ENCODE measurements at regions of chr22 and their contacts with region 1.

Region 1: DNA sequence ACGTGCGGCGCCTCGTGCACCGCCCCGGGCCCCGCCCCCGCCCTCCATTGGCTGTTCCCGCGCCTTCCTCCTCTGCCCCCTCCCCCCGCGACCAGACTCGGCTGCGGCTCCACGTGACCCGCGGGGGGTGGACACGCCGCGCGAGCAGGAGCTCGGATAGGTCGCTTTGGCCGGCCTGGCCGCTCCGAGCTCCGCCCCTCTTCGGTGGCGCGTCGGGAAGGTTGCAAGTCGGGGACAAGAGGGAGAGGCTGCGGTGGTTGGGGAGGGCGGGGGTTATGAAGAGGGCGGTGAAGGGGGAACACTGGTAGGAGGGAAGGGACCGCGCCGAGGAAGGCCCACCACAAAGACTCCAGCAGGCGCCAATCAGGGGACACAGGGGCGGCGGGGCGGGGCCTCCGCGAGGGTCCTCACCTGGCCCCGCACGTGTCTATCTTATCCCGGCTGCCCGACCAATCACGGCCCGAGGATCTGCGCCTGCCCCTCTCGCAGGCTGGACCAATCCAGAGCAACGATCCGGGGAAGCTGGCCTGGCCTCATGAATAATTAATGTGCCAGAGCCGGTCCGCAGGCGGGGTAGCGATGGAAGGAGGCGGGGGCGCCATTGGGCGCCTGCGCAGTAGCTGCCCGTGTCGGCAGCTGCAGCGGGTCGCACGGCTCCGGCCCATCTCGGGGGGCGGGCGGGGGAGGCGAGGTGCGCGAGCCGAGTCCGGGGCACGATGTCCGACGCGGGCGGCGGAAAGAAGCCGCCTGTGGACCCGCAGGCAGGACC is at the start of gene TEF:
- DNase-seq: peak; percentile 96 to 99 (median 98)
- ATAC-seq: peak; percentile 79
- H3K4me3 ChIP-seq: peak within 1 kb of the TSS; percentile 66
- H3K4me3 Mint-ChIP-seq: peak within 1 kb of the TSS; percentile 98
- H3K27ac ChIP-seq: peak within 1 kb of the TSS; percentile 78 to 96
- H3K27ac Mint-ChIP-seq: peak within 1 kb of the TSS; percentile 99
- H3K4me1 ChIP-seq: peaks cover 20% of the 10 kb centered on the region
- H3K4me1 Mint-ChIP-seq: peaks cover 31% of the 10 kb centered on the region
- H3K27me3 ChIP-seq: no peaks in the 10 kb centered on the region
- H3K27me3 Mint-ChIP-seq: no peaks in the 10 kb centered on the region
- CTCF ChIP-seq: no peak
- total RNA-seq, gene TEF: 2.4 to 2.6 TPM

Region 2: GRCh38 chr22:40856513-40857308 is 524.8 kb before region 1 on chr22 and contains the starts of genes ST13 and XPNPEP3:
- CTCF ChIA-PET with region 1: no interaction called
- POLR2A ChIA-PET with region 1: interaction called, 21 read pairs
- intact Hi-C with region 1: loop called (anchors 2 to 5 kb)
- DNase-seq: peak; percentile 94 to 99 (median 96)
- ATAC-seq: peak; percentile 86
- H3K4me3 ChIP-seq: peak within 1 kb of the TSS; percentile 96
- H3K4me3 Mint-ChIP-seq: peak within 1 kb of the TSS; percentile 100
- H3K27ac ChIP-seq: peak within 1 kb of the TSS; percentile 95 to 99
- H3K27ac Mint-ChIP-seq: peak within 1 kb of the TSS; percentile 100
- H3K4me1 ChIP-seq: peaks cover 22% of the 10 kb centered on the region
- H3K4me1 Mint-ChIP-seq: peaks cover 80% of the 10 kb centered on the region
- H3K27me3 ChIP-seq: no peaks in the 10 kb centered on the region
- H3K27me3 Mint-ChIP-seq: no peaks in the 10 kb centered on the region
- CTCF ChIP-seq: peak; percentile 38
- total RNA-seq, gene ST13: 164 to 170 TPM
- total RNA-seq, gene XPNPEP3: 16.3 to 17.9 TPM

Region 3: GRCh38 chr22:41157083-41157482 is 224.4 kb before region 1 on chr22:
- CTCF ChIA-PET with region 1: no interaction called
- POLR2A ChIA-PET with region 1: no interaction called
- intact Hi-C with region 1: no loop called
- DNase-seq: no peak
- ATAC-seq: no peak
- H3K4me3 ChIP-seq: no peak overlapping the region
- H3K4me3 Mint-ChIP-seq: no peak overlapping the region
- H3K27ac ChIP-seq: no peak overlapping the region
- H3K27ac Mint-ChIP-seq: no peak overlapping the region
- H3K4me1 ChIP-seq: no peaks in the 10 kb centered on the region
- H3K4me1 Mint-ChIP-seq: no peaks in the 10 kb centered on the region
- H3K27me3 ChIP-seq: no peaks in the 10 kb centered on the region
- H3K27me3 Mint-ChIP-seq: no peaks in the 10 kb centered on the region
- CTCF ChIP-seq: no peak

Region 4: DNA sequence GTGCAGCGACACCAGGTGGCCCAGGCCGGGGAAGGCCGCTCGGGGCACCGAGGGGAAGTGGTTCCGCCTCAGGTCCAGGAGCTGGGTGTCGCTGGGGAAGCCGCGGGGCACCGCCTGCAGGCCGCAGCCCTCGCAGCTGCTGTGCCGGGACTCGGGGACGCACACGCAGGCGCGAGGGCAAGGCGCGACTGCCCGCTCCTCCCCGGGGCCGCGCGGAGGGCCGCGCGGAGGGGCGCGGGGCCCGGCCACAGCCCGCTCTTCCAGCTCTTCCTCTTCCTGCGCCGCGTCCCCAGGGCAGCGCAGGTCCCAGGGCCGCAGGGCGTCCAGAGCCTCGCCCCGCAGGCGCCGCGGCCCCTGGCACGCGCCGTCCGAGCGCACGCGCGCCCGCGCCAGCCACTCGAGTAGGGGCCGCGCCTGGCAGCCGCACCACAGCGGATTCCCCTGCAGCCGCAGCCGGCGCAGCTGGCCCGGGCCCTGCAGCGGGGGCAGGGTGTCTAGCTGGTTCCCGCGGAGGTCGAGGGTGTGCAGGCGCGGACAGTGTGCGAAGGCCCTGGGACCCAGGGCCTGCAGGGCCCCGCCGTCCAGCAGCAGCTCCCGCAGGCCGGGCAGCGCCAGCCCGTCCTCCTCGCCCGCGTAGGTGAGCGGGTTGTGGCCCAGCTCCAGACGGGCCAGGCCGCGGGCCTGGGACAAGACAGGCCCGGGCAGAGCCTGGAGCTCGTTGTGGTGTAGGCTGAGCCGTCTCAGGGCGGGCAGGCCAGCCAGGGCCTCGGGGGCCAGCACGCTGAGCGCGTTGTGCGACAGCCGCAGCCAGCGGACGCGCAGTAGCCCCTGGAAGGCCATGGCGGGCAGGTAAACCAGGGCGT is 143.6 kb before region 1 on chr22:
- CTCF ChIA-PET with region 1: no interaction called
- POLR2A ChIA-PET with region 1: interaction called, 11 read pairs
- intact Hi-C with region 1: no loop called
- DNase-seq: peak; percentile 74 to 92 (median 84)
- ATAC-seq: peak; percentile 96
- H3K4me3 ChIP-seq: peak overlapping the region; percentile 44
- H3K4me3 Mint-ChIP-seq: peak overlapping the region; percentile 73
- H3K27ac ChIP-seq: no peak overlapping the region
- H3K27ac Mint-ChIP-seq: no peak overlapping the region
- H3K4me1 ChIP-seq: peaks cover 16% of the 10 kb centered on the region
- H3K4me1 Mint-ChIP-seq: peaks cover 5% of the 10 kb centered on the region
- H3K27me3 ChIP-seq: no peaks in the 10 kb centered on the region
- H3K27me3 Mint-ChIP-seq: no peaks in the 10 kb centered on the region
- CTCF ChIP-seq: no peak

Region 5: GRCh38 chr22:41341990-41342389 is 39.5 kb before region 1 on chr22:
- CTCF ChIA-PET with region 1: no interaction called
- POLR2A ChIA-PET with region 1: no interaction called
- intact Hi-C with region 1: no loop called
- DNase-seq: peak in 1 of 14 experiments; percentile 20
- ATAC-seq: no peak
- H3K4me3 ChIP-seq: no peak overlapping the region
- H3K4me3 Mint-ChIP-seq: no peak overlapping the region
- H3K27ac ChIP-seq: no peak overlapping the region
- H3K27ac Mint-ChIP-seq: no peak overlapping the region
- H3K4me1 ChIP-seq: peaks cover 5% of the 10 kb centered on the region
- H3K4me1 Mint-ChIP-seq: no peaks in the 10 kb centered on the region
- H3K27me3 ChIP-seq: no peaks in the 10 kb centered on the region
- H3K27me3 Mint-ChIP-seq: no peaks in the 10 kb centered on the region
- CTCF ChIP-seq: no peak

Region 6: GRCh38 chr22:41448189-41448808 is 66.8 kb after region 1 on chr22:
- CTCF ChIA-PET with region 1: no interaction called
- POLR2A ChIA-PET with region 1: interaction called, 65 read pairs
- intact Hi-C with region 1: loop called (anchors 1 to 2 kb)
- DNase-seq: peak; percentile 79 to 97 (median 84)
- ATAC-seq: peak; percentile 73
- H3K4me3 ChIP-seq: peak overlapping the region; percentile 98
- H3K4me3 Mint-ChIP-seq: peak overlapping the region; percentile 94
- H3K27ac ChIP-seq: peak overlapping the region; percentile 97 to 98
- H3K27ac Mint-ChIP-seq: peak overlapping the region; percentile 95
- H3K4me1 ChIP-seq: peaks cover 41% of the 10 kb centered on the region
- H3K4me1 Mint-ChIP-seq: peaks cover 29% of the 10 kb centered on the region
- H3K27me3 ChIP-seq: no peaks in the 10 kb centered on the region
- H3K27me3 Mint-ChIP-seq: no peaks in the 10 kb centered on the region
- CTCF ChIP-seq: no peak

Region 7: DNA sequence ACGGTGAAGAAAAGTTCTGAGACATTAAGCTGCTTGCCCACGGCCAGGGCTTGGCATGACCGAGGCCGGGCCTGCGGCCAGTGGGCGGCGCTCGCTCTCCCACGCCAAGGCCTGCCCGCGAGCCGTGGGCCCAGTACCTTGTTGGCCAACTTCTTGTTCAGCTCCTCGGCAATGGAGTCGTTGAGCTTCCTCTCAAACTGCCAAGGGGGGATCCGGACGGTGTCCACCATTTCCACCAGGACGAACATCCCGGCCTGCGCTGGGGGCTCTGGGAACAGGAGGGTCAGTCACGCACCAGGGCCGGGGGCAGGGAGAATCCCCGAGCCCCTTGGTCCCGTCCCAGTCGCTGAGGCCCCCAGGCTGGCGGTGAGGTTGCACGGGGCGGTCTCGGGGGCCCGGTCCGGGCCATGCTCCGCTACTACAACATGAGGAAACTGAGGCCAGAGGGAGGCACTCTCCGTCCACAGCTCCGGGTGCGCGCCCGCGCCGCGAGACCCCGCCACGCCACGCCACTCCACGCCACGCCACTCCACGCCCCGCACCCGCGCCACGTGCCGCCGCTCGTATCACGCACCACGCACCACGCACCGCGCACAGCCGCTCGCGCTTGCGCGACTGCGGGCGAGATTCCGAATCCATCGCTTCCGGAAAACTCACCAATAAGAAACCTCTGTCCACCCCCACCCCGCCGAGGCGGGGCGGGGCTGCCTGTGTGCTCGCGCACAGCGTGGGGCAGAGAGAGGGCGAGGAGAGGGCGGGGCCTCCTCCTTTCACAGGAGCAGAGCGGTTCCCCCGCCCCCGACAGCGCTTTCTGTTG is 162.5 kb after region 1 on chr22 and contains the start of gene POLR3H:
- CTCF ChIA-PET with region 1: interaction called, 6 read pairs
- POLR2A ChIA-PET with region 1: interaction called, 12 read pairs
- intact Hi-C with region 1: no loop called
- DNase-seq: peak; percentile 91 to 99 (median 96)
- ATAC-seq: peak; percentile 98
- H3K4me3 ChIP-seq: peak within 1 kb of the TSS; percentile 90
- H3K4me3 Mint-ChIP-seq: peak within 1 kb of the TSS; percentile 98
- H3K27ac ChIP-seq: peak within 1 kb of the TSS; percentile 77 to 81
- H3K27ac Mint-ChIP-seq: peak within 1 kb of the TSS; percentile 85
- H3K4me1 ChIP-seq: peaks cover 26% of the 10 kb centered on the region
- H3K4me1 Mint-ChIP-seq: peaks cover 41% of the 10 kb centered on the region
- H3K27me3 ChIP-seq: no peaks in the 10 kb centered on the region
- H3K27me3 Mint-ChIP-seq: no peaks in the 10 kb centered on the region
- CTCF ChIP-seq: peak; percentile 51
- total RNA-seq, gene POLR3H: 13.4 to 17.3 TPM

Region 8: DNA sequence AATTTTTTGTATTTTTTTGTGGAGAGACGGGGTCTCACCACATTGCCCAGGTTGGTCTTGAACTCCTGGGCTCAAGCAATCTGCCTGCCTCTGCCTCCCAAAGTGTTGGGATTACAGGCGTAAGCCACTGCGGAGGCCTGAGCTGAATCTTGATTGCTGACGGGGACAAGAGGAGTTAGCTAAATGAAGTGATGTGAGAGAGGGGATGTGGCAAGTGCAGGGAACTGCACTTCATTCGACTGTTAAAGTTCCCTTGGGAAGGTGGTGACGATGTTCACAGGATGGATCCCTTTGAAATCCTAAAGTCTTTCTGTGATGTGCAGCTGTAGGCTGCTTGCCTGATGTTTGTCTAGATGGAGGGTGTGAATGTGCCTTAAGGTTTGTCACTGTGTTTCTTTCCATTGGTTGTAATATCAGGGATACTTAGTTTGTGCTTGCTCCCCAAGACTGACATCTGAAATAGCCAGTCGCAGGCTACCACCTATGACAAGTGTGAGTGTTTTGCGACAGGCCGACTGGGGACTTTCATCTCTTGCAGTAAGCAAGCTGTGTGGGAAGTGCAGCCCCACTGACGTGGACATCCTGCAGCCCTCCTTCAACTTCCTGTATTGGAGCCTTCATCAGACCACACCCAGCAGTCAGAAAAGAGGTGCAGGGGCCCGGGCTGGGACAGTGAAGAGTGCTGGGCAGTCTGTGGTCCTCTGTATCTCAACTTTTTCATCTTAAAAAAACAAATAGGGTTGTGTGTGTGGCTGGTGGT is 399.4 kb after region 1 on chr22:
- CTCF ChIA-PET with region 1: no interaction called
- POLR2A ChIA-PET with region 1: interaction called, 11 read pairs
- intact Hi-C with region 1: no loop called
- DNase-seq: peak; percentile 78 to 98 (median 88)
- ATAC-seq: peak; percentile 91
- H3K4me3 ChIP-seq: peak overlapping the region; percentile 69
- H3K4me3 Mint-ChIP-seq: peak overlapping the region; percentile 86
- H3K27ac ChIP-seq: peak overlapping the region; percentile 77 to 94
- H3K27ac Mint-ChIP-seq: peak overlapping the region; percentile 96
- H3K4me1 ChIP-seq: peaks cover 57% of the 10 kb centered on the region
- H3K4me1 Mint-ChIP-seq: peaks cover 54% of the 10 kb centered on the region
- H3K27me3 ChIP-seq: no peaks in the 10 kb centered on the region
- H3K27me3 Mint-ChIP-seq: no peaks in the 10 kb centered on the region
- CTCF ChIP-seq: no peak

Measured in CD4-positive, alpha-beta T cell (primary cell).